ENCODE measurements at regions of chr20 and their contacts with region 1.

Region 1: DNA sequence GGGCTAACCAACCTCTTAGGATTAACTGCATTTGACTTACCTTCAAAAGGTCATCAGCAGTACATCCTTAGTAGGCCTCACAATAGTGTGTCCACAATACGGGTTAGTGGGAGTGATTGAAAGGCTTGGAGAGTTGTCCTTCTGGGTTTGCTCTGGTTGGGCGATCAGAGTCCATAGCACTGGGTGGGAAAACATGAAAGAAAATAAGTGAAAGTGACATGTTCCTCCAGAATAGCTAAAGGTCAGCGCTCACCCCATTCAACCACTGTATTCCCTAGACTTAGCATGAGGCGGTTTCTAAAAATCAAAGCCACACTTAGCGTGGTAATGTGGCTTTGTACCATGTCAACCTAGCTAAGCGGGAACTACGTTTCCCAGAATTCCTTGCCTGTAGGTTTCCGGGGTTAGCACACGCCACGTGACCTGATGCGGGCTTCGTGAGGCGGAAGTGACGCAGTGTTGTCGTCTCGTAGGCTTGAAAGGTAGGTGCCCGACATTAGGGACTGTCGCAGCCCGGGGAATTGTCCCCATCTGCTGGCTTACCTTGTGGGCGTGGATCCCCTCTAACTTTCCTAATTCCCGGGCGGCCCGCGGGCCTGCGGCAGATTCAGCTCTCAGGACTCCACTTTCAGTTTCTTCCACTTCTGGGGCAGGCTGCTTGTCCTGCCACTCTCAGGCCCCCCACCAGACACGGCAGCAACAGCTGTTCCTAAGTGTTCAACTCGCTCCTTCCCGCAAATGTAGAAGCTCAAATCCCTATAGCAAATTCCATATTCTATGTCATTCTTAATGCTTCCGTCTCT is 19.8 kb upstream of the SCP2D1 start:
- DNase-seq: peak; percentile 78 to 90 (median 80)
- ATAC-seq: peak; percentile 99
- H3K4me3 ChIP-seq: peak overlapping the region; percentile 48
- H3K27ac ChIP-seq: peak overlapping the region; percentile 36; the same call in 1 of the 3 replicates
- H3K4me1 ChIP-seq: no peaks in the 10 kb centered on the region
- H3K27me3 ChIP-seq: no peaks in the 10 kb centered on the region
- CTCF ChIP-seq: 0 out of 6 replicates have a peak, but pooled peaks have one; percentile 11 to 22 (median 20)
- EP300 ChIP-seq: no peak
- POLR2A ChIP-seq: peak; percentile 64
- RAD21 ChIP-seq: peak in 1 of 2 experiments; percentile 42; a peak in 3 of 4 replicates

Region 2: DNA sequence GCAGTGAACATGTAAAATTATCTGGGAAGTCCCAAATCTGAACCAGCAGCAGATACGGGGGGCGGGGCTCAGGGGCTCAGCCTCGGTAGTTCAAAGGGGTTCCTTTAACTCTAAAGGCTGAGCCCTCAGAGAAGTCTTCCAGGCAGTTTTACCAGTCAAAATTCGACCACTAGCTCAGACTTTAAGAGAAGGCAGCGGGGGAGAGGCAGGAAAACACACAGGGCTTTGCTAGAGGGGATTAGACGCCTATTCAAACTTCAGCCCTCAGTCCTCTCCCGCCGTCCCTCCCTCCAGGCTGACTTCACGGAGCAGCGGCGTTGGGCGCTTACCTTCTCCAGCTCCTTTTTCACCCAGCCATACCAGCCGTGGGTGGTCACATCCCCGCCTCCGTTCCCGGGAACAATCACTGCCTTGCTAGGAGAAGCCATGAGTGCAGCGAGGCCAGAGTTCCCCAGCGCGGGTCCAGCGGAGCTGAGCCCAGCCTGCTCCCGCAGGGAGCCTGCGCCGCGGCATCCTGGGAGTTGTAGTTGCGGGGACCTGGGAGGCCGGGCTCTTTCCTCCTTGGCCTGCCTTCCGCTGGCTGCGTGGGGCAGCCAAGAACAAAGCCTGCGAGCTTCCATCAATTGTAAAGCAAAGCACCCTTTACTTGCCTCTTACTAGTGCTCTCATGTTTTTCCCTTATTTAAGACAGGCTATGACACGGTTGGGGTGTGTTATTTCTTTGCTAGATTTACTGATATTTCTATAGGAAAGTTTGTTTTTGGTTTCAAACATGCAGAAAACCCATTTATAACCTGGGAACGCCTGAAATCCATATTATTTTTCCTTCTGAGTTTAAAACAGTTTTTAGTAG is 296.9 kb before region 1 on chr20 and contains the start of gene RBBP9:
- CTCF ChIA-PET with region 1: no interaction called
- POLR2A ChIA-PET with region 1: no interaction called
- in situ Hi-C with region 1: no loop called
- intact Hi-C with region 1: no loop called
- DNase-seq: peak; percentile 60 to 82 (median 68)
- ATAC-seq: peak; percentile 100
- H3K4me3 ChIP-seq: peak within 1 kb of the TSS; percentile 66
- H3K27ac ChIP-seq: no peak within 1 kb of the TSS
- H3K4me1 ChIP-seq: peaks cover 0 to 2% of the 10 kb centered on the region in 2 experiments; a peak in 1 of 5 replicates
- H3K27me3 ChIP-seq: no peaks in the 10 kb centered on the region
- CTCF ChIP-seq: no peak
- EP300 ChIP-seq: no peak
- POLR2A ChIP-seq: peak; percentile 42
- RAD21 ChIP-seq: no peak
- polyA plus RNA-seq, gene RBBP9: 0.94 to 2.5 TPM

Region 3: DNA sequence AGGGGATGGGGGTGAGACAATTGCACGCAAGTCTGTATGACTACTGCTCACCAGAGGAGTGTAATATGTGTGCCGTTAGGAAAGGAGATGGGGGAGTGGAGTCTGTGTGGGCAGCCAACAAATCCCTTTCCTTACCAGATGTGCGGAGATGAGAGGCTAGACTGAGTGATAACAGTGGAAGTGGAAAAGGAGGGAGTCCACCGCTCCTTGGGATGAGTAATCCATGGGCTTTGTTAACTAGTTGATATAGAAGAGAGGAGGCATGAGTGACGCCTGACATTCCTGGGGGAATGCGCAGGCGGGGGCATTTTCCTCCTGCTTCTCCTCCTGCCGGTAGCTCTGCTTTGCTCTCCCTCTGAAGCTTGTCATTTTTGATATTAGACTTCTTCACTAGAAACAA is 240.1 kb before region 1 on chr20:
- CTCF ChIA-PET with region 1: no interaction called
- POLR2A ChIA-PET with region 1: no interaction called
- in situ Hi-C with region 1: no loop called
- intact Hi-C with region 1: no loop called
- DNase-seq: no peak
- ATAC-seq: no peak
- H3K4me3 ChIP-seq: no peak overlapping the region
- H3K27ac ChIP-seq: no peak overlapping the region
- H3K4me1 ChIP-seq: no peaks in the 10 kb centered on the region
- H3K27me3 ChIP-seq: no peaks in the 10 kb centered on the region
- CTCF ChIP-seq: no peak
- EP300 ChIP-seq: no peak
- POLR2A ChIP-seq: no peak
- RAD21 ChIP-seq: no peak

Region 4: DNA sequence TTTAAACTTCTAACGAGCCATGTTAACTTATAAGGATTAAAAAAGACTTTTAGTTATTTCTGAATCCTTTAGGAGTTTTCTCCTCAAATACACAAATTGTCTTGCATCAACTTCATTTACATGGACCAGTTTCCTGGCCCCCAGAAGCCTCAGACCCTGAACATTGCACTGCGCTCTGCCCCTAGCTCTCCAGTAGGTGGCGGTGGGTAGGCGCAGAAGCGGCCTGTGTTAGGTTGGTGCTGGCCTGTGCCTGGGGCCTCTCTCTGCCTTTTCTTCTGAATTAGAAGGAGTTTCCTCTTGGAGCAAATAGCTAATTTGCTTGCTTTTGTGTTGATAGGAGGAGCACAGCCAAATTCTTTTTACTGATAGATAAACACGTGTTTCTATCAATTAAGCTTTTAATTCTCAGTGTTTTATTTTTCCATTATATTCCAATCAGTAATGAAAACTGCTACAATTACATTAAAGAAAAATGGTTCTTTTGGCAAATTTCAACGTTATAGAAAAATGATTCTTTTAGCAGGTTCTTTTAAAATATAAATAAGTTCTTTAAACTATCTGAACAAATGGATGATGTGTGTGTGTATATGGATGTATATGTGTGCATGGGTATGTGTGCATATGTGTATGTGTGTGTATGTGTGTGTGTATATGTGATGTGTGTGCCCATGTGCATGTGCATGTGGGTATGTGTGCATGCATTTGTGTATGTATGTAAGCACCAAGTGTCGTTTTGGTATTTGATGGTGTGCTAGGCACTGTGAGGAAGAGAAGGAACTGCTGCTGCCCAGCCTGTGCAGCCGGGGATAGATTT is 161.4 kb before region 1 on chr20:
- CTCF ChIA-PET with region 1: no interaction called
- POLR2A ChIA-PET with region 1: no interaction called
- in situ Hi-C with region 1: no loop called
- intact Hi-C with region 1: loop called (anchors 10 kb)
- DNase-seq: peak; percentile 48 to 63 (median 54)
- ATAC-seq: peak; percentile 100
- H3K4me3 ChIP-seq: no peak overlapping the region
- H3K27ac ChIP-seq: no peak overlapping the region
- H3K4me1 ChIP-seq: no peaks in the 10 kb centered on the region
- H3K27me3 ChIP-seq: no peaks in the 10 kb centered on the region
- CTCF ChIP-seq: peak; percentile 68 to 79 (median 76)
- EP300 ChIP-seq: no peak
- POLR2A ChIP-seq: no peak
- RAD21 ChIP-seq: peak; percentile 62 to 77

Region 5: DNA sequence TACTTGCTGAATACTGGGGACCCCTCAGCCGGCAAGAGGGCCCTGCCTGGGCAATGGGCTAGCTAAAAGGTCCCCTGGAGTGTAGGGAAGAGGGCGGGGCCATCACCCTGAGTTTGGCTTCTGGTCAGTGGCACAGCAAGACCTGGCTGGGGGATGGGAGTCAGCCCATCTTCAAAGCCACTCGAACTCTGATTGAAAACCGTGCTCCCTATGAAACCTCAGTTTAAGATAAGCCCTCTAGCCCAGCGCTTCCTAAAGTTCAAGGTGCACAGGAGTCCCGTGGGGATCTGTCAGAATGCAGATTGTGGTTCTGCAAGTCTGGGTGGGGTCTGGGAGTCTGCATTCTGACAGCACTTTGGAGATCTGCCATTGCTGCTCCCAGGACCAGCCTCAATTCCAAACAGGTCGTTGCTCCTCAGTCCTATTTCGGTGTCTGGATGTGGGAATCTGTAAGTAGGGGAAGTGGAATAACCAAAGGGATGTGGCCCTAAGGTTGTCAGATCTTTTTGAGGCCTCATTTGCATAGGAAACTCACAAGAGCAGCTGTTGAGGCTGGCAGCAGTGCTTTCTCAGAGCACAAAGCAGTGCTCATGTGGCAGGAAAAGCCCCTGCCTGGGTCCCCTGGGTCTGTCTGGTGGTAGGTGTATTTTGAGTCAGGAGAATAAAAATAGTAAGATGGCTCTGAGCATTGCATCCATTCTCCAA is 65.5 kb before region 1 on chr20:
- CTCF ChIA-PET with region 1: no interaction called
- POLR2A ChIA-PET with region 1: no interaction called
- in situ Hi-C with region 1: no loop called
- intact Hi-C with region 1: no loop called
- DNase-seq: no peak
- ATAC-seq: no peak
- H3K4me3 ChIP-seq: no peak overlapping the region
- H3K27ac ChIP-seq: no peak overlapping the region
- H3K4me1 ChIP-seq: no peaks in the 10 kb centered on the region
- H3K27me3 ChIP-seq: no peaks in the 10 kb centered on the region
- CTCF ChIP-seq: no peak
- EP300 ChIP-seq: no peak
- POLR2A ChIP-seq: no peak
- RAD21 ChIP-seq: no peak

Region 6: GRCh38 chr20:18904624-18905023 is 110.8 kb after region 1 on chr20:
- CTCF ChIA-PET with region 1: no interaction called
- POLR2A ChIA-PET with region 1: no interaction called
- in situ Hi-C with region 1: no loop called
- intact Hi-C with region 1: no loop called
- DNase-seq: no peak
- ATAC-seq: no peak
- H3K4me3 ChIP-seq: no peak overlapping the region
- H3K27ac ChIP-seq: no peak overlapping the region
- H3K4me1 ChIP-seq: no peaks in the 10 kb centered on the region
- H3K27me3 ChIP-seq: no peaks in the 10 kb centered on the region
- CTCF ChIP-seq: peak in 1 of 3 experiments; percentile 20; a peak in 1 of 6 replicates
- EP300 ChIP-seq: no peak
- POLR2A ChIP-seq: no peak
- RAD21 ChIP-seq: no peak; a peak in 1 of 4 replicates

Measured in K562 (cell line).